HEK293 (cell line): ENCODE measurements at regions of chr12 and their contacts with region 1.

Region 1: DNA sequence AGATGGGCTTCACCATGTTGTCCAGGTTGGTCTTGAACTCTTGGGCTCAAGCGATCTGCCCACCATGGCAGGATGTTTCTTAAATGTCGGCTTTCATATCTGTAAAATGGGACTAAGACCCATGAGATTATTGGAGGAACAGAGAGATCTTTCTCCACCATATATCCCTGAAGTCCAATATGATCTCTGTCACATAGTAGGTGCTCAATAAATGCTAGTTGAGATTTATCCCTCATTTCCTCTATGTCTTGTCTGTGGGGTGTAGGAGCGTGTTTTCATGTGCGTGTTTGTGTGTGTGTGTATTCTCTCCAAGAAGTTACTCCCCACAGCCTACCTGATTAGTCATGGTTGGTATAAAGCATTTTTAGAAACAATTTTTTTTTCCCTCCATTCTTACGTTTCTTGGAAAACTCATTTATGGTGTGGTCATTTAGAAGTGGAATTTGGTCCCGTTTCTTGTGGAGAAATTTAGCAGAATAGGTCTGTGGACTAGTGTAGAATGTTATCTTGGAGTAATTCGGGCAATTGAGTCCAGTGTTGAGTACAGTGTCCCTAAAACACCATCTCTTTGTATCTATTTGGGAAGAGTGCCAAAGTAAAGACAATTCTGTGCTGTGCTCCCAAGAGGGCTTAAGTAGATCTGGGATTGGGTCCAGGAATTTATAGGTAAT is 4.3 kb downstream of the STRAP start:
- H3K4me3 ChIP-seq: no peak overlapping the region
- H3K27ac ChIP-seq: peak overlapping the region; percentile 33
- H3K4me1 ChIP-seq: peaks cover 19% of the 10 kb centered on the region
- CTCF ChIP-seq: no peak

Region 2: DNA sequence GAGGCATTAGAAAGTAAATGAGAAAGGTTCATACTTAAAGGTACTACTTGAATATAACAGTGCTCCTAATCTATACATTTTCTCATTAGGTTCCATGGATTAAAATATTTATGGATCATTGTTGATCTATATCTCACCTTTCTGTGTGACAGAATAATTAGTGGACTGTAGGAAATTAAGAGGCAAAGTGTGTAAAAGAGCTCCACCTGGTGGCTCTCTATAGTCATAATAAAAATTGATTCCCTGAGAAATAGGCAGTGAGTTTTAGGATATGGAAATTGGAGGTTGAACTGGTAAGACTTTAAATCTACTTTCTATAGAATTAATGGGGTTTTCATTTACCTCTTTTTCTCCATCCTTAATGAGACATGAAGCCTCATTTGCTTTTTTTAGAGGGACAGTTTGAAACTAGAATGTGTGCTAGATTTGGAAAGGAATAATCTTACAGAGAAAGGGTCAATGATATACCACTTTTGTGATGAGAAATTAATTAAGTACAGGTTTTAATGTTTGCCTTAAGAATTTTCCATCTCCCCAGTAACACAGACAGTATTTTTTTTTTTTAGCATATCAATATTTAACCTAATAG is 12.9 kb after region 1 on chr12:
- CTCF ChIA-PET with region 1: interaction called, 43 read pairs
- POLR2A ChIA-PET with region 1: interaction called, 4 read pairs
- H3K4me3 ChIP-seq: no peak overlapping the region
- H3K27ac ChIP-seq: no peak overlapping the region
- H3K4me1 ChIP-seq: no peaks in the 10 kb centered on the region
- CTCF ChIP-seq: no peak